Transverse colon (tissue), 4 donors: ENCODE measurements at regions of chr11 and their contacts with region 1.

Region 1: DNA sequence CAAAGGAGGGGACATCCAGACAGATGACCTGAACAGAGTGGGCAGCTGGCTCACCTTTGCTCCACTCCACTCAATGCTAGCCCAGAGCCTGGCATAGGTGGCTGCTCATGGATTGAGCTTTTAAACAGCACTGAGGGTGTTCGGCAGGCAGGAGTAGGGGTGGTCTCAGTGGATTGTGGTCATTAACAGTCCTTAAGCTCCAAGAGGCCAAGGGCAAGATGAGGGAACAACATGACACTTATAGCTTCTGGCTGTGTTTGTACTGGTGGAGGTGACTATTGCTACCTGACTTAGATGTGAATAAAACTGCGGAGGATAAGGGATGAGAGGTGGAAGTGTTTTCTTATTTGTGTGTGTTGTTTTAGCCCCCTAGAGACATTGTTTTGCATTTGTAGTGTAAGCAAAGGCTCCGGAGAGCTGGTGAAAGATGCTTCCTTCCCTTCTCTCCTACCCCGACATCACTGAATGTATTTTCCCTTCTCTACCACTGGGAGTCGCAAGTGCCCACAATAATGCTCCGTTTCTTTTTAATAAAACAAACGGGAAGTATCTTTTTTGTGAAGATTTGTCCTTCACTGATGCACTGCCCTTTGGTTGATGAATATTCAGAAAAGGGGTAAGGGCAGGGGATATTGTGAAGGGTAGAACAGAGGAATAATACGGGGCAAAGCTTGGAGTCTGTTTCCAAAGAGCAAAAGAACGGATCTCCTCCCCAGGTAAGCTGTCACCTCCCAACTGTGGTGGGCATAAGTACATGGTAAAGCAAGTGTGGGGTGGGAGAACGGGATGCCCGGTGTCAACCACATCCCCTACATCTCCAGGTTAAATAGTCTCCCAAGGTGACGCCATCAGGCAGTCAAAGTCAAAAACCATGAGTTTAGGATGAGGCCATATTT is 27.5 kb upstream of the MTNR1B start:
- DNase-seq: no peak
- H3K4me3 ChIP-seq: no peak overlapping the region
- H3K27ac ChIP-seq: no peak overlapping the region
- H3K4me1 ChIP-seq: no peaks in the 10 kb centered on the region
- H3K27me3 ChIP-seq: no peaks in the 10 kb centered on the region
- CTCF ChIP-seq: peak; percentile 54 to 70 (median 64)
- EP300 ChIP-seq: no peak
- POLR2A ChIP-seq: no peak

Region 2: GRCh38 chr11:92993004-92993403 is 51.1 kb after region 1 on chr11:
- in situ Hi-C with region 1: no loop called
- intact Hi-C with region 1: no loop called
- DNase-seq: no peak
- H3K4me3 ChIP-seq: no peak overlapping the region
- H3K27ac ChIP-seq: no peak overlapping the region
- H3K4me1 ChIP-seq: no peaks in the 10 kb centered on the region
- H3K27me3 ChIP-seq: no peaks in the 10 kb centered on the region
- CTCF ChIP-seq: no peak
- EP300 ChIP-seq: no peak
- POLR2A ChIP-seq: no peak

Region 3: DNA sequence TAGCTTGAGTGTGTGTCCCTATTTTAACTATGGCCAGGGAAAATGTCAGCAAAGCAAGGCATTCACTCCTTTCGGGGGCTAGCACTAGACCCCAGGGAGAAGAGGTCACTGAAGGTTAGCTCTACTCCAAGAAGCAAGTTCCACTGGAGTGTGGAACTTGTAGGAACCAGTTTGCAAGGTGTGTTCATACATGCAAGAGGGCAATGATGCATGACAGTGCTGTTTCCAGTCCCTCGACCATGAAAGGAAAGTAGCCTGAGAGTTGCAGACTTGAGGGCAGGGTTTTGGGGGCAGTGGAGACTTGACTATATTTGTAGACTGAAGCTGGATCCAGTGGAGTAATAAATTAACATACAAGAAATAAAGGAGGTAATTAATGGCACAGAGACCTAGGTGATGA is 277.5 kb after region 1 on chr11:
- in situ Hi-C with region 1: loop called in 2 of 4 experiments (anchors 10 to 25 kb)
- intact Hi-C with region 1: no loop called
- DNase-seq: no peak
- H3K4me3 ChIP-seq: no peak overlapping the region
- H3K27ac ChIP-seq: no peak overlapping the region
- H3K4me1 ChIP-seq: no peaks in the 10 kb centered on the region
- H3K27me3 ChIP-seq: no peaks in the 10 kb centered on the region
- CTCF ChIP-seq: no peak
- EP300 ChIP-seq: no peak
- POLR2A ChIP-seq: no peak

Region 4: DNA sequence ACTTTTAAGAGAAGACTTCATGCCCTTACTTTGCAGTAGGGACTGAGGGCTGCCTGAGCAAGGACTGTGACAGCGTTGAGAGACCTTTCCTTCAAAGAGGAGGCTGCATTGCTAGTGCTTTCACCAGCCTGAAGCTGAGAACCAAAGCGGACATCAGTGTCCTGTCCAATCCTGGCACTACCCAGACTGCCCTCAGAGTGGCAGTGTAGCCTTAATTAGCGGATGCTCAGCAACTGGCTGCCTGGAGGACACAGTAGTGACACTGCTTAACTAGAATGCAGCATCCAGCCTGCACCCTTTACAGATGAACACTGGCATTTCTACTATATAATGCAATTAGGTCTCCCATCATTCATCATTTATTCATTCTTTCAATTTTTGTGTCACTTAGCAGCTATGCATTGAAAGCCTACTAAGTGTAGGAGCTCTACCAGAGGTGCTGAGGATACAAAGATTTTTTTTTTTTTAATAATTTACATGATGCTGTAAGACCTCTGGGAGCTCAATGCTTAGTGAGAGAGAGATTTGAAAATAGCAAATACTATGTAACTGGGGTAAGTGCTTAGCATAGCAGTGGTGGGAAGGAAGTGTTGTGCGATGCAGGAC is 292.8 kb after region 1 on chr11:
- in situ Hi-C with region 1: loop called in 2 of 4 experiments (anchors 10 to 25 kb)
- intact Hi-C with region 1: no loop called
- DNase-seq: peak; percentile 82
- H3K4me3 ChIP-seq: no peak overlapping the region
- H3K27ac ChIP-seq: no peak overlapping the region
- H3K4me1 ChIP-seq: peaks cover 0 to 15% (median 2%) of the 10 kb centered on the region in 4 donors
- H3K27me3 ChIP-seq: no peaks in the 10 kb centered on the region
- CTCF ChIP-seq: peak; percentile 84 to 88 (median 87)
- EP300 ChIP-seq: no peak
- POLR2A ChIP-seq: no peak